Adrenal gland (tissue), 19 donors: ENCODE measurements at regions of chr4 and their contacts with region 1.

Region 1: DNA sequence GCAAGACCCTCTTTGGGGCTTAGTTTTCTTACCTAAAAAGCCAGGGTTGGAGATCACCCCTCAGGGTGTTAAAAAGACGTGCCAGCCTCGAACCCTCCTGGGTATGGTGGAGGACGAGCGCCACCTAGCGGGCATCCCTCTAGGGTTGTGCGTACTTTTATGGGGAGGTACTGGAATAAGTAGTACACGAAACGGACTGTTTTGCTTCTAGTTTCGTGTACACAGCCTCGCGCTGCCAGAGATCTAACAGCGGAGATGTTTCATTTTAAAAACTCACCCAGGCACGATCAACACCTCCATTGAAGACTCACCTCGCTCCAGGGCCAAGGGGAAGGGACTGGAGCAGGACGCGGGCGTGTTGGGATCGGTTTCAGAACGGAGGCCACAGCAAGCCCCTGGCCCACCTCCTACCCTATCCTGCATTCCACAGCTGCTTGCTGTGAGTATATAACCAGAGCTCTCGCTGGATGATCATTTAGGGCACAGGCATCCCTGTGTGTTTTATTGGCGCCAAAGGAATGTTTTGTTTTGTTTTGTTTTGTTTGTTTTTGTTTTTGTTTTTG is 4.8 kb upstream of the NKX3-2 start:
- DNase-seq: peak; percentile 65 to 89 (median 83)
- H3K4me3 ChIP-seq: peak overlapping the region in 1 of 4 donors; percentile 47
- H3K27ac ChIP-seq: no peak overlapping the region
- H3K4me1 ChIP-seq: peaks cover 0 to 33% of the 10 kb centered on the region in 2 donors
- H3K27me3 ChIP-seq: peaks cover 59% of the 10 kb centered on the region
- CTCF ChIP-seq: peak; percentile 79 to 95 (median 91)
- POLR2A ChIP-seq: no peak

Region 2: DNA sequence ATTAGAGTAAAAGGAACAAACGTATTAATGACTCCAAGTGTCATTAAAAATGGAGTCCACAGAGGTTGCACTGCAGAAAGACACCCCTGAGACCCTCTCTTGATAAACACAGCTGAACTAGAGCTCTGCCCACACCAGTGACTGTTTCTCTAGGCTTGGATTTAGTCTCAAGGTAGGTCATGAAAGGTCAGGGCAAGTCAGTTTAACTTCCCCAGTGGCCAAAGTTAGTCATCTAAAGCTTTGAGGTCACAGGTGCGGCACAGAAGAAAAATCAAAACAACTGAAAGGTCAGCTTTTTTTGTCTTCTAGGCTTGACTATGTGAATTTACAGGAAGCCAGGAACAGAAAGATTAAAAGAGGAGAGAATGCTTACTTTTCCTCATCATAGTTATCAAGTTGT is 814.5 kb before region 1 on chr4:
- intact Hi-C with region 1: loop called (anchors 5 to 10 kb)
- DNase-seq: peak in 1 of 7 donors; percentile 9
- H3K4me3 ChIP-seq: no peak overlapping the region
- H3K27ac ChIP-seq: no peak overlapping the region
- H3K4me1 ChIP-seq: peaks cover 0 to 5% of the 10 kb centered on the region in 2 donors
- H3K27me3 ChIP-seq: no peaks in the 10 kb centered on the region
- CTCF ChIP-seq: no peak
- POLR2A ChIP-seq: no peak

Region 3: DNA sequence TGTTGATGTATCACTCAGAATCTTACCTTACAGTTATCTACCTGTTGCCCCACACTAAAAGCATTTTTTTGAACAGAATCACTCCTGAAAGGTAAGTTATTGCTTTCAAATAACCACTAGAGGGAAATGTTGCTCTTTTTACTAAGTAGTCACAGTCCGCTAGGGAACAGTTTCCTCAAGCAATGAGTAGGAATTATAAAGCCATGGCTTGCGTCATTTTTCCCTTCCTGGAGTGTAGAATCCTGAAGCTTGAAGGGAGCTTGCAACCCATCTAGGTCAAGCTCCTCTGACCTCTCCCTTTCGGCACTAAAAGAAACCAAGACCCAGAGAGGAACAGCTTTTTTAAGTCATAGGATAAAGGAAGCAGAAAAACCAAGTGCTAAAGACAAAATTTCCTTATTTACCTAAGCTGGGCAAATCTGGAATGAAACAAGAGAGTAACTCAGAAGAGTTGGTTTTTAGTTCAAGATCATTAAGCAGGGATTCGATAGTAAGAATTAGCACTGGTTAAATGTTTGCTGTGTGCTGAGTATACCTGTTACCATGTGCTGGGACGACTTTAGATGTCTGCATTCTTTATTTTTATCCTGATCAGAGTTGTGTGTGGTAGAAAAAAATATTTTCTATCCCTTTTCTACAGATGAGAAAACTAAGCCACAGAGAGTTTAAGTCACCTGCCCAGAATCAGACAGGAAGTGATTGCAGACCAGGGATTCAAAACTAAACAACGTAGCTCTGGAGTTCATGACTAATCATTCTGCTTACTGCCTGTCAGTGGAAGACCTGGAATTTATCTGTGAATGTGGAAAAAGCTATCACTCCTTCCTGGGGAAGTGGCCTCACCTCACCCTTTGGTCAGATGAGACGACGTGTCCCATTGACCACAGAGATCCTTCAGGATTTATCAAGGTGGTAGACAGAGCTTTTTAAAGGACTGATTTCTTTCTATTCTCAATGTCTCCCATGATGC is 696.4 kb before region 1 on chr4:
- intact Hi-C with region 1: loop called (anchors 2 to 10 kb)
- DNase-seq: peak in 3 of 7 donors; percentile 11 to 21 (median 15)
- H3K4me3 ChIP-seq: no peak overlapping the region
- H3K27ac ChIP-seq: no peak overlapping the region
- H3K4me1 ChIP-seq: peaks cover 0 to 4% of the 10 kb centered on the region in 2 donors
- H3K27me3 ChIP-seq: no peaks in the 10 kb centered on the region
- CTCF ChIP-seq: peak; percentile 58 to 75 (median 66)
- POLR2A ChIP-seq: no peak

Region 4: GRCh38 chr4:13403833-13404232 is 145.2 kb before region 1 on chr4:
- intact Hi-C with region 1: loop called in 1 of 2 experiments (anchors 10 kb)
- DNase-seq: no peak
- H3K4me3 ChIP-seq: no peak overlapping the region
- H3K27ac ChIP-seq: no peak overlapping the region
- H3K4me1 ChIP-seq: no peaks in the 10 kb centered on the region
- H3K27me3 ChIP-seq: no peaks in the 10 kb centered on the region
- CTCF ChIP-seq: peak in 3 of 6 experiments; percentile 15 to 29 (median 22)
- POLR2A ChIP-seq: no peak

Region 5: DNA sequence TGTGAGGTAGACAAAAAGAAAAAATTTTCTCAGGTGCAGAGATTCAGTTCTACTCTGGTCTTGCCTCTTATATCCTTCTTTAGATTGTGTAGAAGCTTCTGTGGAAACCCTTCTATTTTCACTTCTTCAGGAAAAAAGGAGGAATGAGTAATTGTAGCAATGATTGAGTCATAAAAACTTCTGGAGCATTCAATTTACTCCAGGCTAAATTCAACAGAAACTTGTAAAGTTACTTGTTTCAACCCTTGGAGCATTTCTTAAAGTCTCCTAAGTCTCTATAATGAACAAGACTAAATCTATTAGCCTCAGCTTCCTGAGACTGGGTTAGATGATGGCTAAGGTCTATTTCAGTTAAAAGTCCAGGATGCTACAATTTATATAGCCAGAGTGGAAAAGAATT is 48.5 kb after region 1 on chr4:
- intact Hi-C with region 1: no loop called
- DNase-seq: no peak
- H3K4me3 ChIP-seq: no peak overlapping the region
- H3K27ac ChIP-seq: peak overlapping the region in 1 of 5 donors; percentile 24
- H3K4me1 ChIP-seq: peaks cover 0 to 7% of the 10 kb centered on the region in 2 donors
- H3K27me3 ChIP-seq: no peaks in the 10 kb centered on the region
- CTCF ChIP-seq: no peak
- POLR2A ChIP-seq: no peak

Region 6: DNA sequence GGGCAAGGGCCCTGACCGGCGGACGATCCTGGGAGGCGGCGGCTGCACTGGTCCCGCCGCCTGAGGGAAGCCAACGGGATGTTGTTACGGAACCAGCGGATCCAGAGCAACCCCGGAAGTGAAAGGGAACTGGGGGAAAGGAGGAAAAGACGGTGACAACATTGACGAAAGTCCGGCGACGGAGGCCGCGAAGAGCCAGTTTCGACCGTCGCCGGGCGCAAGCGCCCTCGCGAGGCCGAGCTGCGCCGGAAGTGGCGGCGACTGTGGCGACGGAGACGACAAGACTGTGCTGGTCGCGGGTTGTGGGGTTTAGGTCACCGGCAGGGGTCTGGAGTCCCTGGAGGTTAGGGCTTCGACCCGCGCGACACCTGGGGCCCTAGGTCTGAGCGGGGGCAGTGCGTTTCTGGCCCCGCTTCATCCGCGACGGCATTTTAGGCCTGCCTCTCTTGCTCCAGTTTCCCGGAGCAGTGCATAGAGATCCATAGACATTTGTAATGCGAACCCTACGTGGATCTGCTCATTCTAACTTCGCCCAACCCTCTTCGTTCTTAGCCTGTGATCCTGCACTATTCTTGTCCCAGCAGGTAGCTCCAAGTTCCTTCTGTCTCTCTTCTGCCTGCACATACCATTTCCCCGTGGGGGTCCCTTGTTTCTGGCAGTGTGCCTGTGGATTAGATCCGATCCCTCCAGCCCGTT is 78.7 kb after region 1 on chr4 and contains the start of gene BOD1L1:
- intact Hi-C with region 1: no loop called
- DNase-seq: peak; percentile 90 to 95 (median 92)
- H3K4me3 ChIP-seq: peak within 1 kb of the TSS; percentile 85 to 96 (median 89)
- H3K27ac ChIP-seq: peak within 1 kb of the TSS; percentile 72 to 97 (median 92)
- H3K4me1 ChIP-seq: peaks cover 11 to 34% of the 10 kb centered on the region in 2 donors
- H3K27me3 ChIP-seq: no peaks in the 10 kb centered on the region
- CTCF ChIP-seq: peak in 4 of 6 experiments; percentile 13 to 38 (median 36)
- POLR2A ChIP-seq: peak; percentile 83 to 89
- total RNA-seq, gene BOD1L1: 16.4 to 31.0 (median 22.0) TPM